Dendritic cell treated with granulocyte-macrophage colony-stimulating factor and Interleukin-4, amounts not matched to agents 40 ng/mL and 50 ng/mL, for 4 days (primary cell): ENCODE measurements at regions of chr5 and their contacts with region 1.

Region 1: DNA sequence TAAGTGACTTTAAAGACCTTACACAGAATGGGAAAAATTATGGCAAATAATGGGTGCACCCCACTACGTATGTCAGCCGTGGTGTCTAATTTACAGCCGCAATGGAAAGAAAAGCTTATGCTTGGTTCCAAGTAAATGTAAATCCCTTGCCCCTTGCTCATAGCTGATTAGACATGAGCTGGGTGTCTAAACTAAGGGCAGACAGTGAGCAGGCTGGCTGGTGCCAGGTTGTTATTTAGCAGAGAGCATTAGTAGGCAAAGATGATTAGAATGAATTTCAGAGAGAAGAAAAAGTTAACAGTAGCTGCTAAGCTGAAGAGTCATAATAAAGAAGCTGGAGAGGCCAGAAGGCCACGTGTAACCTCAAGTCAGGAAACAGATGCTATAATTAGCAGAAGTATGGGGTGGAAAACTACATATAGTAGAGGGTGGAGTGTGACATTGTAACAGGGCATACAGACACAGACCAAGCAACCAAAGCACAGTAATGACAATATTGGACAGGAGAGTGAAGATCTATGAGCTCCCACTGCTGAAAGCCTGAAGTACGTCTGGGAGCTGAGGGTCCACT is 257.7 kb downstream of the MCTP1 start:
- H3K4me3 Mint-ChIP-seq: peak overlapping the region; percentile 34
- H3K27ac Mint-ChIP-seq: peak overlapping the region; percentile 87
- H3K4me1 Mint-ChIP-seq: peaks cover 72% of the 10 kb centered on the region
- H3K27me3 Mint-ChIP-seq: no peaks in the 10 kb centered on the region

Region 2: DNA sequence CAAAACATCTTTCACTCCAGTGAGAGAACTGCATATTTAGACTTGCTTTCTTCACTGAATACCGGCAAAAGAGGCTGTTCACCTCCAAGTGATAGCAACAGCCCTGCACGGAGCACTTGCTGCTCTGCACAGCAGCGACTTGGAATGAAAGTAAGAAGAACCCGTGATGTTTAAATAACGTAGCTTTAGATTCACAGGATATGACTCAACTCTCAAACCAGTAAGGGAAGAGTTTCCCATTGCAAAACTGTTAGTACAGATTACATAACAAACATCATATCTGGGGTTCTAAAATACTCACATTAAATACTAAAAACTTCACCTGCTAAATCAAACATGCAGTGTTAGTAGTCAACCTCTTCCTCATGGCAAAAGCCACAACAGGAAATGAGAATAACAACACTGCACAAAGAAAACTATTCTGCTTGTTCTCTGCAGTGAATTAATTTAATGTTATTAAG is 54.3 kb after region 1 on chr5:
- intact Hi-C with region 1: loop called (anchors 5 kb)
- H3K4me3 Mint-ChIP-seq: peak overlapping the region; percentile 70
- H3K27ac Mint-ChIP-seq: peak overlapping the region; percentile 71
- H3K4me1 Mint-ChIP-seq: peaks cover 41% of the 10 kb centered on the region
- H3K27me3 Mint-ChIP-seq: no peaks in the 10 kb centered on the region